HEK293T (cell line): ENCODE measurements at regions of chr17 and their contacts with region 1.

Region 1: DNA sequence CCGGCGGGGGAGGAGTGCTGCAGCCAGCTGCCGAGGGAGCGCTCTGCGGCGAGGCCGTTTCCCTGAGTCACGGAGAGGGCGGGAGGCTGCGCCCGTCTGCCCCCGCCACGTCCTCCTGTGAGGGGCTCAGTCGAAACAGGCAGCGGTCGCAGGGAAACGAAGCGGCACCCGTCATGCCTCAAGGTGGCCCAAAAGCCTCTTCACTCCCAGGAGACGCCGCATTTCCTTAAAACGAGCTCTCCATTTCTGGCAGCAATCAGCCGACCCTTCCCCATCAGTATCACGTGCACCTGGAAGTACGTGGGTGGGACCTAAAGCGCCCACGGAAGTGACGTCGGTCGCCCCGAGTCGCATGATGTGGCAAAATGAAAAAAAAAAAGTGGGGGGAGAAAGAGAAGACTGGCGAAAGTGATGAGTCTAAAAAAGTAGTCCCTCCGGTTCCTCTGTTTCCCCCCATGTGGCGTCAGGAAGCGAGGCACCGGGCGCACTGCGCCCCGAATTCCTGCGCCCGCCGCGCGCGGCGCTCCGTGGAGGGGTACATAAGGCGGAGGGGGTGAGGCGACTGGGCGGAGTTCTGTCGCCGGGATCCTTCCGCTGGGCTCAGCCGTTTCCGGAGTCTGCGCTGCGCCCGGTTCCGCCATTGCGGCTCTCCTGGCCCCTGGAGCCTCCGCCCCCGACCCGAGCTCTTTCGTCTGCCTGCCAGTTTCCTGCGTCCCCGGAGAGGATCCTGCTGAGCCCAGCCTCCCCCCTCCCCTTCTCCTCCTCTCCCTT is at the start of gene CLTC:
- DNase-seq: peak; percentile 83

Region 2: DNA sequence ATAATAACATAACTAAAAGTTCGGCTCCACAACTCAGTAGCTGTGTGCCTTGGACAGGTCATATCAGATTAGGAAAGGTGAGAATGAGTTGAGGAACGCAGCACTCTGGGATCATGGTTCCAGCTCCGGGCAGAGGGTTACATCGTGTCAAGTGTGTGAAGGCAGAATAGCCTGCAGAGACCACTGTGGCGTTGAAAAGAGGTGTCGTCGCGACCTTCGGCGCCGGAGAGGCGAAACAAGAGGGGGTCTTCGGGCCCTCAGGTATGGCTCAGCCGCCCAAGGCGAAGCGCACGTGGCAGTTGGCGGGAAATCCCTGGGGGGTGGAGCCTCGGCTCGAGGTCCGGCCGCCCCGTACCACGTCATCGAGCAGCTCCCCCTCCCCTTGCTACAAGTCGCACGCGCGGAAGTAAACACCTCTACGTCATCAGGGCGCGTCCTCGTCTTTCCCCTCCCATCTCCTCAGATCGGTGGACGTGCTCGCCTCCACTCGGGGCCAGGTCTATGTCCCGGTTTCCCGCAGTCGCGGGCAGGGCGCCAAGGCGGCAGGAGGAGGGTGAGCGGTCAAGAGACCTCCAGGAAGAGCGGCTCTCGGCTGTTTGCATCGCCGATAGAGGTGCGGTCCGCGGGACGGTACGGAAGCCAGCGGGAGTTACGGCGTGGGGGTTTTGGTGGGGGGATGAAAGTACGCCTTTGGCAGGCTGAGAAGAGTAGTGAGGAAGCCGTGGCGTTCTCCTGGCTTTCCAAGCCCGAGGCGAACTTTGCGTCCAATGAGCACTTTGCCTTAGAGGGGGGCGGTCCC is 54.1 kb before region 1 on chr17 and contains the start of gene DHX40:
- CTCF ChIA-PET with region 1: no interaction called
- POLR2A ChIA-PET with region 1: interaction called, 13 read pairs
- DNase-seq: peak; percentile 98

Region 3: DNA sequence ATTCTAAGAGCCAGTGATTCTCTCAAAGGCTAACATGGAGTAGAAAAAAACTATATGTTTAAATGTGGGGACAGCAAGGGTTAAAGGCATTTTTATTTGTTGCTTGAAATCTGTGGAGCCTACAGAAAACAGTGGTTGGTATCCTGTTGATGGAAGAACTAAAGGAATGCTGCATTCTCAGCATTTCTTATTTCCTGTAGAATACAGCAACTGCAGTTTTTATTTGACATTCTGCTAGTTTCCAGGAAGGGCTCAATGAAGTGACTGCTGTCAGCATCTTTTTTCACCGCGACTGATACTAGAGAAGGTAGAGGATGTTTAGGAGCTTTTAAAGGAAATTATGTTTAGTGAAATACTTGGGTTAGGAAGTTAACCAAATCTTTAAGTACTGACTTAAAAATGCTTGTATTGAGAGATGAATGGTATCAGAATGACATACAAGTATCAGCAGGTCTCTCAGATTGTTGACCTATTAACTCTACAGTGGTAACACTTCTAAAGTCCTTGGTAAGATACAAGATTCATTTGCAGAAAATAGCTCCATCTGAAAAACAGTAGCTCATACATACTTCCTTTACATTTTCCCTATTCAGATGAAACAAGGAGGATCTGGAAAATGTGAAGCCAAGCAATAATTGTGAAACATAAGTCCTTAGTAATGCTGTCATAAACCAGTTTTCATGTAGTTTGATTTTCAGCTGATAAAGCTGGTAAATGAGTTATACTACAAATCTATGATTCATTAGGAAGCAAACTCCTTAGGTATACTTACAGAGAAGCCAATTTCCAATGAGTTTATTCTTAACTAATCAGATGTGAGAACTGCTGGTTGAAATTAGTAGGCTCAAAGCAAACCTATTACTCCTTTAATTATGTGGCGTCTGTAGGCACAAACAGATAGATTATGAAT is 15.4 kb after region 1 on chr17:
- CTCF ChIA-PET with region 1: no interaction called
- POLR2A ChIA-PET with region 1: interaction called, 14 read pairs
- DNase-seq: no peak

Region 4: GRCh38 chr17:59651346-59651745 is 31.9 kb after region 1 on chr17:
- CTCF ChIA-PET with region 1: no interaction called
- POLR2A ChIA-PET with region 1: interaction called, 13 read pairs
- DNase-seq: no peak

Region 5: DNA sequence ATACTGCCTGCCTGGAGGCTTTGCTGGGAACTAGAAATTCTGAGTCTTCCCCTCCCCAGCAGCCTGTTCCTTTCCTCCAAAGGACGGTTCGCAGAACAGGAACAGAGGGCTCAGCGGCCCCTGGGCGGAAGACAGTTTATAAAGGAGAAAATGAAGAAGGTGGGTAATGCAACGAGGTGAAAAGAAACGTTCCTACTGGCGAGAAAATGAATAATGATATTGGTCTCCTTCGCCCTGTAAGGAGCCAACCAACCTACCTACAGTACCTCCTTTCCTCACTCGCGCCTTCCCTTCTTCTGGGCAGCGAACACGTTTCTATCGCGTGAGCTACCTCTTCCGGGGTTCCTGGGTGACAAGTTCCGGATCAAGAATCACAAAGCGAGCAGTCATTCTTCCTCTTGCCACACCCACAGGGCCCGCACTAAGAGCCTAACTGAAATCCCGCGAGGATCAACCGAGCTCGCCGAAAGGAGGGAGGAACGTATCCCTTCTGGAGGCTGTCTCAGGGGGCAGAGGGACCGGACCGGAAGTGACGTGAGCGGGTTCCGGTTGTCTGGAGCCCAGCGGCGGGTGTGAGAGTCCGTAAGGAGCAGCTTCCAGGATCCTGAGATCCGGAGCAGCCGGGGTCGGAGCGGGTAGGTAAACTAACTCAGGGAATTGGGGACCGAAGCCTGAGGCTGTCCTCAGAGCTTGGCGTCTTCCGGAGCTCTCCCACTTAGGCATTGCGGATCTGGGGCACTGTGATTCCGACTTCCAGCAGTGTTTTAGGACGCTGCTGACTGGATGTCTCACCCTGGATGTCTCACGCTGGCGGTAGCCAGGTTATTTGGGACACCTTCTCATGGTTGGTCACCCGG is 87.9 kb after region 1 on chr17 and contains the starts of genes PTRH2 and VMP1:
- CTCF ChIA-PET with region 1: no interaction called
- POLR2A ChIA-PET with region 1: interaction called, 22 read pairs
- DNase-seq: peak; percentile 99

Region 6: DNA sequence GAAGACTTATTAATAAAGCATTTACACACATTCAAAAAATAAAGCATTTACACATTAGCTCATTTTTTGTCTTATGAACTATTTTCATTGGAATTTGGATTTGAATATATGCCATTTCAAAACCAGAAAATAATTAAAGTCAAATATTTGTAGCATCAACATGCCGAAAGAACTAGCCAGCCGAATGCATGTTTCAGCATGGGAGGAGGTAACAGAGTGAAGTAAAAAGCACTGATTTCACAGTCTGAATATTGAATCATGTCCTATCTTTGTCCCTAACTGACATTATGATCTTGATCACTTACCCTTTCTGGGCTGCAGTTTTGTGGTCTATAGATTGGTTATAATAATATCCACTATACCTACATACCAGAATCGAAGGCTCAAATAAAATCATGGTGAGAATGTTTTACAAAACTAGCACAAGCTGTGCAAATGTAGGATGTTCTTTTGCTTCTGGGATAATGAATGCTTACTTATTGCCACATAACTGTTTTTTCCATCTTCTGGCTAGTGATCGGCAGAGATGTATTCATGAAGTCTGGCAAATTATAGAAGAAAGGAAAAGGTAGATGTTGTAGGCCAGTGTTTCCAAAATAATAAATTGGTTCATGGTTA is 188.5 kb after region 1 on chr17:
- CTCF ChIA-PET with region 1: no interaction called
- POLR2A ChIA-PET with region 1: no interaction called
- DNase-seq: no peak